ENCODE measurements at regions of chr4 and their contacts with region 1.

Region 1: DNA sequence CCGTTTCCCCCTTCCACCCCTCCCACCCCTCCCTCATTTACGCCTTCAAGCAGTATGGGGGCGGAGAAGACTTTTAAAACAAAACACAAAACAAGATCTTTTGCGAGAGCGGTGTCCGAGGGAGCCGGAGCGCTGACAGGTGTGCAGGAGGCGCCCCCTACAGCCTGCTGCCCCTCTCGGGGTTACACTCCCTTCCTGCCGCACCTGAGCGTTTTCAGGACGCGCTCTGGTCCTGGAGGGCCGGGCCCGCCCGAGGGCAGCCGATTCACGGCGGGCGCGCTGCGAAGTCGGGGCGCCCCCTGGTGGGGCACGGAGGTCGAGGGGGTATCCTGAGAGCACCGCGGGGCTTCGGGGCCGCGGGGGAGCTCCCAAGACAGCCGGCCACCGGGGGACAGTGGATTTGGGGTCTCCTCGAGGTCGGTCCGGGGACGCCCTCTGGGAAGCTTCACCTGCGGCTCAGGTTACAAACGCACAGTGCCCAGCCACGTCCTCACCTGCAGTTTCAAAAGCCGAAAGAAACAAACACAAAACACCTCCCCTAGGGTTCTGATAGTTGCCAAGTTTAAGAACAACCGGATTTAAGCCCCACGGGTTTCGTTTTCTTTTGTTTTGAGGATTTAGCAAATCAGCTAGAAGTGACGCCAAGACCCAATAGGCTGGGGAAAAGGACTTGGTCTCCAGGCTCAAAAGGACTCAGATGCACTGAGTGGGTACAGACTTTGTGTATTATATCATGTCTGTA is 8.0 kb upstream of the NEUROG2 start:
- DNase-seq: peak; percentile 94
- H3K4me3 Mint-ChIP-seq: peak overlapping the region; percentile 88
- H3K27ac Mint-ChIP-seq: peak overlapping the region; percentile 38
- H3K4me1 Mint-ChIP-seq: peaks cover 30% of the 10 kb centered on the region
- H3K27me3 Mint-ChIP-seq: peaks cover 70% of the 10 kb centered on the region

Region 2: DNA sequence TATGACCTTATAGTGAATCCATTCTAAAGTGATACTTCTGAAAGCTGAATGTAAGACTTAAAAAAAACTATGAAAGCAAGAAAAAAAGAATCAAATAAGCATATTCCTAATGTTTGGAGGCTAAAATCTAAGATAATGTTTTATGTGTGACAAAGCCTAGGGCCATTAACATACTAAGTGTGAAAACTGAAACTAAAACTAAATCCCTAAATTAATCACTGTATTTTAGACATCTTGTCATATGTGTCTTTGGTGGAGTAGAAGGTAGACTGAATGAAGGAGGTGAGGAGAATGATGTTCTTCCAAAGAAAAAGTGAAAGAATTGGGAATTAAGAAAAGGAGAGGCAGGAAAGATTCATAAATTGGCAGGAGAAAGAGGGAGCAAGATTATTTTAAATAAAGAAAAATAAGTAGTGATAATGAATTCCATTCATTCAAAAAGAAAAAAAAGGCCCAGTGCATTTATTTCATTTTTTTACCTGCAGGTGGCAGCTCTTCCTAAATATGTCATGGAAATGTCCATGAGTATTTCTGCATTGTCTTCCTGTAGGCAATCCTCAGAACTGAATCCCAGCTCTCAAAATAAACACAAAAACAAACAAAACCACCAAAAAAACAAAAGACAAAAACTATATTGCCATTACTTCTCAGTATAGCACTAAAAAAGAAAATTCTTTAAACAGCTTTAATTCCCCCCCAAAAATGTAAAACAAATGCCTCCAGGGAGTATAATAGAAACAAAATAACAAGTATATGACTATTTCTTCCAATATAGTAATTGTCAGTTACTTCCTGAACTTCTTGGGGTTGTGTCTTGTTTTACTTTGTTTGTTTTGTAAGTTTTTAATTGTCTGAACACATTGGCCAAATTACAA is 309.3 kb before region 1 on chr4:
- intact Hi-C with region 1: loop called (anchors 5 kb)
- DNase-seq: no peak
- H3K4me3 Mint-ChIP-seq: no peak overlapping the region
- H3K27ac Mint-ChIP-seq: no peak overlapping the region
- H3K4me1 Mint-ChIP-seq: peaks cover 4% of the 10 kb centered on the region
- H3K27me3 Mint-ChIP-seq: peaks cover 4% of the 10 kb centered on the region

Region 3: GRCh38 chr4:112327965-112328733 is 195.8 kb before region 1 on chr4:
- intact Hi-C with region 1: loop called (anchors 1 kb)
- DNase-seq: peak; percentile 64
- H3K4me3 Mint-ChIP-seq: no peak overlapping the region
- H3K27ac Mint-ChIP-seq: no peak overlapping the region
- H3K4me1 Mint-ChIP-seq: no peaks in the 10 kb centered on the region
- H3K27me3 Mint-ChIP-seq: no peaks in the 10 kb centered on the region

Region 4: DNA sequence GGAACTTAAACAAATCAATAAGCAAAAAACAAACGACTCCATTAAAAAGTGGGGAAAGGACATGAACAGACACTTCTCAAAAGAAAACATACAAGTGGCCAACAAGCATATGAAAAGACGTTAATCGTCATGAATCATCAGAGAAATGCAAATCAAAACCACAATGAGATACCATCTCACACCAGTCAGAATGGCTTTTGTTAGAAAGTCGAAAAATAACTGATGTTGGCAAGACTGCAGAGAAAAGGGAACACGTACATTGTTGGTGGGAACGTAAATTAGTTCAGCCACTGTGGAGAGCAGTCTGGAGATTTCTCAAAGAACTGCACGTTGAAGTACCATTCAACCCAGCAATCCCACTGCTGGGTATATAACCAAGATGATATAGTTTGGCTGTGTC is 31.6 kb before region 1 on chr4:
- intact Hi-C with region 1: no loop called
- DNase-seq: no peak
- H3K4me3 Mint-ChIP-seq: no peak overlapping the region
- H3K27ac Mint-ChIP-seq: no peak overlapping the region
- H3K4me1 Mint-ChIP-seq: no peaks in the 10 kb centered on the region
- H3K27me3 Mint-ChIP-seq: peaks cover 7% of the 10 kb centered on the region

Region 5: GRCh38 chr4:112604589-112604988 is 80.7 kb after region 1 on chr4:
- intact Hi-C with region 1: loop called (anchors 10 kb)
- DNase-seq: peak; percentile 84
- H3K4me3 Mint-ChIP-seq: no peak overlapping the region
- H3K27ac Mint-ChIP-seq: no peak overlapping the region
- H3K4me1 Mint-ChIP-seq: no peaks in the 10 kb centered on the region
- H3K27me3 Mint-ChIP-seq: no peaks in the 10 kb centered on the region